Breast epithelium (tissue), 4 donors: ENCODE measurements at regions of chr12 and their contacts with region 1.

Region 1: GRCh38 chr12:55771736-55772135 is 28.8 kb downstream of the GDF11 start:
- DNase-seq: no peak
- H3K4me3 ChIP-seq: no peak overlapping the region
- H3K27ac ChIP-seq: no peak overlapping the region
- H3K4me1 ChIP-seq: no peaks in the 10 kb centered on the region
- H3K27me3 ChIP-seq: no peaks in the 10 kb centered on the region
- CTCF ChIP-seq: no peak
- POLR2A ChIP-seq: no peak

Region 2: DNA sequence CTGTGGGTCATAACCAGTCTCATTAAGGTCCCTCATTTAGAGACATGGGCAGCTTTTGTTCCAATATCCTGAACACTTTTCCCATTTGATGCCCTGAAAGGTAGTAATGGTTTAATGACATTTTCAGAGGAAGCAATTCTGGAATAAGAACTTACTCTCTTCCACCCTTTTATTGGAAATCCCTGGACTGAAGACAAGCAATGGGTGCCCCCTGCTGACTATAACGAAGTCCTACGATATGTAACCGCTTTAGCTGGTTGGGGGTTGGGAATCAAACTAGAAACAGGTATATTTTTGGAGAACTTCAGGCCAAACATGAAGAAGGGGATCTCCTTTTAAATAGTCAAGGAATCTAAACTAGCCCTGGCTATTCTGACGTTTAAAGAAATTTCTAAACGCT is 25.3 kb after region 1 on chr12:
- intact Hi-C with region 1: loop called (anchors 1 kb)
- DNase-seq: no peak
- H3K4me3 ChIP-seq: no peak overlapping the region
- H3K27ac ChIP-seq: no peak overlapping the region
- H3K4me1 ChIP-seq: no peaks in the 10 kb centered on the region
- H3K27me3 ChIP-seq: no peaks in the 10 kb centered on the region
- CTCF ChIP-seq: peak in 1 of 3 donors; percentile 19
- POLR2A ChIP-seq: no peak